Right cardiac atrium (tissue), 5 donors: ENCODE measurements at regions of chr2 and their contacts with region 1.

Region 1: GRCh38 chr2:203056288-203056687 is 41.6 kb downstream of the NBEAL1 start:
- DNase-seq: no peak
- ATAC-seq: no peak
- H3K4me3 ChIP-seq: no peak overlapping the region
- H3K27ac ChIP-seq: no peak overlapping the region
- H3K4me1 ChIP-seq: no peaks in the 10 kb centered on the region
- H3K27me3 ChIP-seq: no peaks in the 10 kb centered on the region

Region 2: DNA sequence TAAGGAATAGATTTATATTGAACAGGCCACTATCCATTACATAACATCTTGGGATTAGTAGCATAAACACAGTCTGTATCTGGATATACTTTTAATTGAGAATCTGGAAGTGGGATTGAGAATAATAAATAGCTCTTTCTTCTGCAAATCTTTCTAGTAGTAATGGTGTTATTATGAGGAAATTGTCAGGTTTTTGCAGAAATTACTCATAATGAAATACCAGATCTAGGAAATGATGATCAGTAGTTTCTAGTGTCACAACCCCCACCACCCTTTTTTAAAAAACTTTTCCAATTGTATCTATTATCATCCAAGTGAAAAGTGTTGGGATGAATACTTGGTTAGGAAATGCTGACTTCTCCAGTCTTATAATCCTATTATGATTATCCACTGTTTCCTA is 22.9 kb before region 1 on chr2:
- intact Hi-C with region 1: loop called in 1 of 4 experiments (anchors 2 kb)
- DNase-seq: no peak
- ATAC-seq: no peak
- H3K4me3 ChIP-seq: no peak overlapping the region
- H3K27ac ChIP-seq: no peak overlapping the region
- H3K4me1 ChIP-seq: no peaks in the 10 kb centered on the region
- H3K27me3 ChIP-seq: no peaks in the 10 kb centered on the region

Region 3: GRCh38 chr2:203453858-203454451 is 397.7 kb after region 1 on chr2:
- intact Hi-C with region 1: no loop called
- DNase-seq: no peak
- ATAC-seq: peak; percentile 61 to 72
- H3K4me3 ChIP-seq: no peak overlapping the region
- H3K27ac ChIP-seq: no peak overlapping the region
- H3K4me1 ChIP-seq: no peaks in the 10 kb centered on the region
- H3K27me3 ChIP-seq: no peaks in the 10 kb centered on the region